ENCODE measurements at regions of chr4 and their contacts with region 1.

Region 1: DNA sequence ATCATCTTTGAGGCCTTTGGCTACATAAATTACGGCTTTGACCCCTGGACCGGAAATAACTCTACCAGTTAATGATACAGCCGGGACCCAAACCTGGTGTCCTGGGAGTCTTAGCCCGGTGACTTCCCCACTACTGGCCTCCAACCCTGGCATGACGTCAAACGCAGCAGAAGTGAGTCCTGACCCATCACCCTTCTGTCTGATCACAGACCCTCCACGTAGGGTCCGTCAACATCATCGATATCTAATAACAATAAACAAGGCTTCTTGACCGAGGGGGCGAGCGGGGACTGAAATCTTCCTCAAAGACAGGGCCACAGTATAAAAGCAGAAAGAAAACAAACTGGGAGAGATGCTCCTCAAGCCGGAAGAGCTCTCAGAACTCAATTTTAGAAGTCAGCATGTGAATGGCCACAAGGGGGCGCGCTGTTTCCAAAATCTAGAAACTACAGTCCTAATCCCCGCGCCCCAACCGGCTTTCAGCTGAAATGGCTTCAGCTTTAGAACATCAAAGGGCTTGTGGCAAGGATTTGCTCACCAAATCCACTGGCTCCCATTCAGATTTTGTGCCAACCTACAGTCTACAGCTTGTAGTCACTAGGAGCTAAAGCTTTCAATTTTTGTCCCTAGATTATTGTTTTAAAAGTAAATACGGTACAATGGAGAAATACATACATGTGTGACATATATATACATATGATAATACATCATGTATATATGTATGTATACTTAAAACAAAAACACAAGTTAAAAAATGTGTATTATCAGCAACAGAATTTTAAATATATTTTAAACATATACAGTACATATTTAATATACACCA is 46.4 kb upstream of the ENPP6 start:
- DNase-seq: peak; percentile 91 to 94 (median 93)
- ATAC-seq: peak; percentile 63 to 85 (median 82)
- H3K4me3 ChIP-seq: no peak overlapping the region
- H3K27ac ChIP-seq: peak overlapping the region in 1 of 12 donors; percentile 1
- H3K4me1 ChIP-seq: peaks cover 0 to 39% (median 0%) of the 10 kb centered on the region in 12 donors
- H3K27me3 ChIP-seq: no peaks in the 10 kb centered on the region
- CTCF ChIP-seq: peak; percentile 86 to 99 (median 94)
- POLR2A ChIP-seq: no peak

Region 2: GRCh38 chr4:184343502-184344177 is 79.5 kb after region 1 on chr4:
- intact Hi-C with region 1: loop called in 1 of 10 experiments (anchors 5 kb)
- DNase-seq: peak; percentile 75 to 85 (median 83)
- ATAC-seq: peak; percentile 75 to 84 (median 76)
- H3K4me3 ChIP-seq: peak overlapping the region; percentile 31 to 77 (median 62)
- H3K27ac ChIP-seq: peak overlapping the region in 11 of 12 donors; percentile 71 to 94 (median 85)
- H3K4me1 ChIP-seq: peaks cover 8 to 71% (median 47%) of the 10 kb centered on the region in 12 donors
- H3K27me3 ChIP-seq: no peaks in the 10 kb centered on the region
- CTCF ChIP-seq: no peak
- POLR2A ChIP-seq: no peak

Region 3: DNA sequence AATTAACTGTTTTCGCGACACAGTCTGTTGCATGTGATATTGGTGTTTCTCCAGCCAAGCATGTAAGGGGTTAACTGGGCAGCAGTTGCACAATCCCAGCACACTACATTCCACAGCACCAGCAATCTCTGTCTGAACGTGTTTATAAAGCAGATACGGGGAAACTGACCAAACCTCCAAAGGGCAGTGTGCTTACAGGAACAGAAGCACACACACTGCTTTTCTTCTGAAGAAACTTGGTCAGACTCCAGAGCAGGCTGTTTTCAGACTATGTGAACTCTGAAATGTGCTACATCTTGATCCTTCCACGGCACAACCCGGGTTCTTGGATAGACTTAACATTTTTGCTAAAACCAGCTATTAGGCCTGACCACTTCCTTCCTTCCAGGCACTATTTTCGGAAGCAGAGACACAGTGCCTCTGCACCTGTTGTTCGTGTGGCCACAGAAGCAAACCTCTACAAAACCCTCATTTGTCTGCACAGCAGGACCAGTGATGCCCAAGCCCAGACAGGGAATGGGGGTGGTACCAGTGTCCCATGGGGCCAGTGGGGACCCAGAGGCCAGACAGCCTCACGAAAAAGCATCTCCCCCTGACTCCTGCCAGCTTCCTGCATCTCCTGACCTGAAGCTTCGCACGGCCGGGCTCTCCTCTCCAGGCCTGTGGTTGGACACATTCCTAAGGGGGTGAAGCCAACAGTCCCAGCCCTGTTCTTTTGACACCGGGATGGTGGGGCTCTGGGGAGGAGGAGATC is 120.1 kb after region 1 on chr4:
- intact Hi-C with region 1: loop called in 1 of 10 experiments (anchors 10 kb)
- DNase-seq: peak in 1 of 5 donors; percentile 31
- ATAC-seq: peak; percentile 5 to 72 (median 34)
- H3K4me3 ChIP-seq: peak overlapping the region in 9 of 12 donors; percentile 5 to 42 (median 28)
- H3K27ac ChIP-seq: peak overlapping the region; percentile 60 to 96 (median 90)
- H3K4me1 ChIP-seq: peaks cover 18 to 78% (median 64%) of the 10 kb centered on the region in 12 donors
- H3K27me3 ChIP-seq: no peaks in the 10 kb centered on the region
- CTCF ChIP-seq: no peak
- POLR2A ChIP-seq: peak in 1 of 2 donors; percentile 6

Region 4: GRCh38 chr4:184544788-184545409 is 280.8 kb after region 1 on chr4:
- intact Hi-C with region 1: loop called in 2 of 10 experiments (anchors 2 to 5 kb)
- DNase-seq: no peak
- ATAC-seq: peak in 1 of 4 donors; percentile 34
- H3K4me3 ChIP-seq: no peak overlapping the region
- H3K27ac ChIP-seq: no peak overlapping the region
- H3K4me1 ChIP-seq: peaks cover 0 to 4% (median 0%) of the 10 kb centered on the region in 12 donors
- H3K27me3 ChIP-seq: no peaks in the 10 kb centered on the region
- CTCF ChIP-seq: no peak
- POLR2A ChIP-seq: no peak

Region 5: DNA sequence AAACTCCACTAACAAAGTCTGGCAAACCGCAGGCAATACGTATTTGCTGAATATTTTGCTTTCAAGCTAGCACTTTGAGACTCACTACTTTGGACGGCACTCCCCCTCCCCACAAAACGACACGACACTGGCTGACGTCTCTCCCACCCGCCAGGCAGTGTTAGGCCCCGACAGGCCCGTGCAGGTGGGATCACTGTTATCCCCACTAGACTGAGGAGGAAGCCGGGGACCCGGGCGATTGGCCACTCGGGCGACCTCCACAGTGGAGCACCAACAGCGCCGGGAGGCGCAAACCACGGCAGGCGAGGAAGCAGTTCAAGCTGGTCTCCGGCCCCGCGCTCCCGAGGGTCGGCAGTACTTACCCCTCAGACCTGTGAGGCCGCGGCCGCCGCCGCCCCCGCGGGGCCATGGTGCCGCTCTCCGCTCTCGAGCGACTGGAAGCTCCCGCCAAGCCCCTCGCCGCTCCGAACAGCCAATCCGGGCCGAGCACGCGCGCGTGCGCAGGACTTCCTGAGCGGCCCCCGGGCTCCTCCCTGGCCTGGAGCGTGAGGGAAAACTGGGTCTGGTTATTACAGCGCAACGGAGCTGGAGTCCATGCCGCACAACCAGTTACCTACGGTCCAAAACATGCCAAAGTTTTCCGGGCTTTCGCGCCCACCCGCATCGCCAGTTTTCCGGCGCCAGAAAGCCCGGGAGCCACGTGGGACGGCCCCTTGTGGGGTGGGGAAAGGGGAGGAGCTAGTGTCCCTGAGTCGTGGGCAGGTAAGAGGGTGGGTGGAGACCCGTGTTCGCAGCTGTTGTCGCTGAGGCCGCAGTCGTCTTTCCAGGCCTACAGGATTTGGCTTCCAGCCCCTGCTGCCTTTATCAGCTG is 469.8 kb after region 1 on chr4 and contains the start of gene CENPU:
- intact Hi-C with region 1: loop called in 2 of 10 experiments (anchors 10 kb)
- DNase-seq: peak; percentile 96 to 98 (median 97)
- ATAC-seq: peak; percentile 99 to 100 (median 100)
- H3K4me3 ChIP-seq: peak within 1 kb of the TSS; percentile 45 to 94 (median 71)
- H3K27ac ChIP-seq: peak within 1 kb of the TSS in 11 of 12 donors; percentile 45 to 82 (median 62)
- H3K4me1 ChIP-seq: peaks cover 0 to 20% (median 11%) of the 10 kb centered on the region in 12 donors
- H3K27me3 ChIP-seq: no peaks in the 10 kb centered on the region
- CTCF ChIP-seq: peak in 1 of 12 donors; percentile 3
- POLR2A ChIP-seq: peak in 1 of 2 donors; percentile 73
- total RNA-seq, gene CENPU: 0.36 to 7.1 (median 1.3) TPM

Region 6: GRCh38 chr4:185171373-185172071 is 907.4 kb after region 1 on chr4:
- intact Hi-C with region 1: no loop called
- DNase-seq: no peak
- ATAC-seq: no peak
- H3K4me3 ChIP-seq: no peak overlapping the region
- H3K27ac ChIP-seq: no peak overlapping the region
- H3K4me1 ChIP-seq: peaks cover 0 to 14% (median 0%) of the 10 kb centered on the region in 12 donors
- H3K27me3 ChIP-seq: no peaks in the 10 kb centered on the region
- CTCF ChIP-seq: no peak
- POLR2A ChIP-seq: no peak